ENCODE measurements at regions of chr15 and their contacts with region 1.

Region 1: GRCh38 chr15:97234851-97235610 is 725.5 kb upstream of the ARRDC4 start:
- DNase-seq: peak; percentile 48 to 57 (median 51)
- ATAC-seq: peak; percentile 86
- H3K4me3 ChIP-seq: no peak overlapping the region
- H3K27ac ChIP-seq: no peak overlapping the region
- H3K4me1 ChIP-seq: no peaks in the 10 kb centered on the region; a peak in 1 of 5 replicates
- H3K27me3 ChIP-seq: no peaks in the 10 kb centered on the region
- CTCF ChIP-seq: peak; percentile 65 to 76 (median 76)
- EP300 ChIP-seq: no peak
- POLR2A ChIP-seq: no peak
- RAD21 ChIP-seq: peak; percentile 78 to 84

Region 2: DNA sequence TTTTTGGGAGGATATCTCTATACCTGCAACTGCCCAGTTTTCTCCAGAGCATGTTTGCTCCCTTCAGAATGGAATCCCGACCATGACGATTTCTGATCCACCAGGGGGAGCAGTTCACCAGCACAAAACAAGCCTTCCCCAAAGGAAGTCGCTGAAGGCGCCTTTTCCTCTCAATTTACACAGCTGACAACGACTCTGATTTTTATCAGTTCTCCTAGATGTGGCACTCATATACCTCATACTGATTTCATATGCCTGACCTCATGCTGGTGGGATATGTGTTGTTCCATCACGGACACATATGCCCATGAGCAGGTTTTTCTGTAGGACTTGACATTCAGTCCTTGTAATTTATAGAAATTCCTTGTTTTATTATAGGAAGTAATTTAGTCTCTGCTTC is 1975.5 kb before region 1 on chr15:
- CTCF ChIA-PET with region 1: no interaction called
- POLR2A ChIA-PET with region 1: no interaction called
- in situ Hi-C with region 1: loop called (anchors 10 kb)
- intact Hi-C with region 1: loop called (anchors 5 kb)
- DNase-seq: peak; percentile 49 to 85 (median 58)
- ATAC-seq: peak; percentile 95
- H3K4me3 ChIP-seq: no peak overlapping the region
- H3K27ac ChIP-seq: no peak overlapping the region
- H3K4me1 ChIP-seq: peaks cover 0 to 4% of the 10 kb centered on the region in 2 experiments; a peak in 3 of 5 replicates
- H3K27me3 ChIP-seq: no peaks in the 10 kb centered on the region; a peak in 1 of 5 replicates
- CTCF ChIP-seq: peak; percentile 64 to 85 (median 79)
- EP300 ChIP-seq: 0 out of 2 replicates have a peak, but pooled peaks have one; percentile 2
- POLR2A ChIP-seq: no peak
- RAD21 ChIP-seq: peak; percentile 85 to 91

Region 3: GRCh38 chr15:95875121-95875688 is 1359.8 kb before region 1 on chr15:
- CTCF ChIA-PET with region 1: no interaction called
- POLR2A ChIA-PET with region 1: no interaction called
- in situ Hi-C with region 1: loop called (anchors 25 kb)
- intact Hi-C with region 1: no loop called
- DNase-seq: no peak
- ATAC-seq: no peak
- H3K4me3 ChIP-seq: no peak overlapping the region
- H3K27ac ChIP-seq: no peak overlapping the region
- H3K4me1 ChIP-seq: no peaks in the 10 kb centered on the region
- H3K27me3 ChIP-seq: no peaks in the 10 kb centered on the region
- CTCF ChIP-seq: no peak
- EP300 ChIP-seq: no peak
- POLR2A ChIP-seq: no peak
- RAD21 ChIP-seq: no peak

Region 4: DNA sequence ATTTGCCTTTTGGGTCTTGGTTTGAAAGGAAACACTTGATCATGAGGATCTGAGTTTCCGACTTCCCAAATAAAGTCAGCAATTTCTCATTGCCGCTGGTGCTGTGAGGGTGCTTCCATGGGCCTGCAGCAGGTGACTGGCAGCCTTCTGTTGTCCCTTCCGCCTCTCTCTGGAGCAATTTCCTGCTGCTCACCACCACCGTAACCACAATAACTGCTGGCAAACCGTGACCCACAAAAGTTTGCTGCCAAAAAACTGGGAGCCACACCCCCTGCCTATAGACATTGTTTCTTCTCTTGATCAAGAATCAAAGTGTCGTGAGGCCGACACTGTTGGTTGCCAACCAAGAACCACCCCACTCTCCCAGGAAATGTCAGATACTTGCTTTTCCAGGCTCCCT is 740.5 kb before region 1 on chr15:
- CTCF ChIA-PET with region 1: no interaction called
- POLR2A ChIA-PET with region 1: no interaction called
- in situ Hi-C with region 1: no loop called
- intact Hi-C with region 1: loop called (anchors 10 kb)
- DNase-seq: no peak
- ATAC-seq: no peak
- H3K4me3 ChIP-seq: no peak overlapping the region
- H3K27ac ChIP-seq: no peak overlapping the region
- H3K4me1 ChIP-seq: peaks cover 3 to 9% of the 10 kb centered on the region in 2 experiments; a peak in 1 of 5 replicates
- H3K27me3 ChIP-seq: peaks cover 9 to 12% of the 10 kb centered on the region in 2 experiments; a peak in 3 of 5 replicates
- CTCF ChIP-seq: no peak
- EP300 ChIP-seq: no peak
- POLR2A ChIP-seq: no peak
- RAD21 ChIP-seq: no peak

Region 5: GRCh38 chr15:97425596-97425995 is 190.6 kb after region 1 on chr15:
- CTCF ChIA-PET with region 1: no interaction called
- POLR2A ChIA-PET with region 1: no interaction called
- in situ Hi-C with region 1: no loop called
- intact Hi-C with region 1: no loop called
- DNase-seq: no peak
- ATAC-seq: no peak
- H3K4me3 ChIP-seq: no peak overlapping the region
- H3K27ac ChIP-seq: no peak overlapping the region
- H3K4me1 ChIP-seq: no peaks in the 10 kb centered on the region
- H3K27me3 ChIP-seq: no peaks in the 10 kb centered on the region
- CTCF ChIP-seq: no peak
- EP300 ChIP-seq: no peak
- POLR2A ChIP-seq: no peak
- RAD21 ChIP-seq: no peak

Region 6: DNA sequence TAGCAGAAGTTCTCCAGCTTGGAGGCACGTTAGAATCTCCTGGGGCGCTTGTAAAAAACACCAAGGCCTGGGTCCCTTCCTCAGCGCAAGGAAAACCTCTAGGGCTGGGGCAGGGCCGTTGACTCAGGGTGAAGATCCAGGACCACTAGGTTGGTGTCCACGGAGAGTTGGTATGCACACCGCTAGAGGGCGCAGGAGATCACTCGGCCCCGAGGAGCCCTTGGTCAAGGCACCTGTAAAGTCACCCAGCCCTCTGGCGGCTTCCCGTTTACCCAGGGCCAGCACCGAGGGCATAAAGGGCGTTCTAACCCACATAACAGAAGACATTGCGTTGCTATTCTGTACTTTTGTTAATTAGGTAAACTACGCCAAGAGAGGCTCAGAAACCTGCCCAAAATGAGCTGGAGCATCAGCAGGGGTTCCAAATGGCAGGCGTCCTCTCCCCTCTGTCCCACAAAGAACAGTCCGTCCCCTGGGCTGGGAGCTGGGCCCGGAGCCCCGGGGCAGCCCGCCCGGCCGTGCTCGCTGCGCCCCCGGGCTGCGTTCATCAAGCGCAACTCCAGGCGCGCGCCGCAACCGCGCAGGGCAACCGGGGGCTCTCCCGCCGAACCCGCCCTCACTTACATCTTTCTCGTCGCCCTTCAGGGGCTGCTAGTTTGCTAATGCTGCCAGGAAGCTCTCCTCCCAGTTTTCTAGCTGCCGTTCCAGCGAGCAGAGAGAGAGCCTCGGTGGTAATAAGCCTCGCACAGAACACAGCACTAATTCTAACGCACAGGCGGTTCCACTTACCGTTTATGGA is 1057.6 kb after region 1 on chr15:
- CTCF ChIA-PET with region 1: no interaction called
- POLR2A ChIA-PET with region 1: no interaction called
- in situ Hi-C with region 1: no loop called
- intact Hi-C with region 1: loop called (anchors 10 kb)
- DNase-seq: peak; percentile 61 to 83 (median 76)
- ATAC-seq: peak; percentile 99
- H3K4me3 ChIP-seq: no peak overlapping the region
- H3K27ac ChIP-seq: no peak overlapping the region
- H3K4me1 ChIP-seq: peaks cover 0 to 5% of the 10 kb centered on the region in 2 experiments; a peak in 1 of 5 replicates
- H3K27me3 ChIP-seq: peaks cover 11 to 25% of the 10 kb centered on the region in 2 experiments; a peak in 3 of 5 replicates
- CTCF ChIP-seq: peak; percentile 68 to 84 (median 81)
- EP300 ChIP-seq: no peak
- POLR2A ChIP-seq: no peak
- RAD21 ChIP-seq: peak in 1 of 2 experiments; percentile 29; a peak in 1 of 4 replicates